Sigmoid colon (tissue), 7 donors: ENCODE measurements at regions of chr3 and their contacts with region 1.

Region 1: DNA sequence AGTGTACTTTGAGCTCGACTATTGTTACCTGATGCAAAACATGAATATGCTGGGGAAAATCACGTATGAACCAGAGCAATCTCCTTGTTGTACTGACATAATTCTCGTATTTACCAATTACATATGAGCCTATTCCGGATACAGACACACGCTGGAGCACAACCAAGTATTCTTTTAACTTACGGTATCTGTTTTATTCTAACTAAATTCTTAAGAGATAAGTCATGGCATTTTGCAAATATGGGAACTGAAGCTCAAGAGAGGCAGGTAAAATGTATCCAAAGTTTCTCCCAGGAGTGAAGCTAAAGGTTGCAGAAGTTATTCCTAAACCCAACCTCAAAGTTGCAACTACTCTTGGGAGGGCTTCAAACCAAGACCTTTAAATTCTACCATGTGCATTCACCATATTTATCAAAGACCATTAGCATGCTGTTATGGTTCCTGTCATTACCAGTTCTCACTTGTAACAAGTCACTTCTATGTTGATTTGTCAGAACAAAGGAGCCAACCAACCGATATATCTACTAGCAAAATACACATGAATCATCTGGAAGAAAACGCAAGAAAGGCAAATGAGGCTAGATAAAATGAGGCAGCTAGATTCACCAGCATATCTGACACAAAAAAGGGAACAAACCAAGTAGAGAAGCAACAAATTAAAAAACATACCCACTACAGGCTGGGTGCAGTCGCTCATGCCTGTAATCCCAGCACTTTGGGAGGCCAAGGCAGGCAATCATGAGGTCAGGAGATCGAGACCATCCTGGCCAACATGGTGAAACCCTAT is 17.8 kb downstream of the TBL1XR1 start:
- DNase-seq: no peak
- H3K4me3 ChIP-seq: no peak overlapping the region
- H3K27ac ChIP-seq: no peak overlapping the region
- H3K4me1 ChIP-seq: peaks cover 0 to 53% (median 37%) of the 10 kb centered on the region in 4 donors
- H3K27me3 ChIP-seq: no peaks in the 10 kb centered on the region
- CTCF ChIP-seq: no peak
- EP300 ChIP-seq: no peak
- POLR2A ChIP-seq: no peak

Region 2: GRCh38 chr3:177089110-177089509 is 90.4 kb before region 1 on chr3:
- intact Hi-C with region 1: no loop called
- DNase-seq: no peak
- H3K4me3 ChIP-seq: no peak overlapping the region
- H3K27ac ChIP-seq: no peak overlapping the region
- H3K4me1 ChIP-seq: peaks cover 0 to 35% (median 26%) of the 10 kb centered on the region in 4 donors
- H3K27me3 ChIP-seq: no peaks in the 10 kb centered on the region
- CTCF ChIP-seq: no peak
- EP300 ChIP-seq: no peak
- POLR2A ChIP-seq: no peak

Region 3: GRCh38 chr3:177144923-177145780 is 34.3 kb before region 1 on chr3:
- intact Hi-C with region 1: loop called (anchors 5 kb)
- DNase-seq: no peak
- H3K4me3 ChIP-seq: no peak overlapping the region
- H3K27ac ChIP-seq: no peak overlapping the region
- H3K4me1 ChIP-seq: peaks cover 0 to 72% (median 61%) of the 10 kb centered on the region in 4 donors
- H3K27me3 ChIP-seq: no peaks in the 10 kb centered on the region
- CTCF ChIP-seq: no peak
- EP300 ChIP-seq: no peak
- POLR2A ChIP-seq: no peak